ENCODE measurements at regions of chr6 and their contacts with region 1.

Region 1: DNA sequence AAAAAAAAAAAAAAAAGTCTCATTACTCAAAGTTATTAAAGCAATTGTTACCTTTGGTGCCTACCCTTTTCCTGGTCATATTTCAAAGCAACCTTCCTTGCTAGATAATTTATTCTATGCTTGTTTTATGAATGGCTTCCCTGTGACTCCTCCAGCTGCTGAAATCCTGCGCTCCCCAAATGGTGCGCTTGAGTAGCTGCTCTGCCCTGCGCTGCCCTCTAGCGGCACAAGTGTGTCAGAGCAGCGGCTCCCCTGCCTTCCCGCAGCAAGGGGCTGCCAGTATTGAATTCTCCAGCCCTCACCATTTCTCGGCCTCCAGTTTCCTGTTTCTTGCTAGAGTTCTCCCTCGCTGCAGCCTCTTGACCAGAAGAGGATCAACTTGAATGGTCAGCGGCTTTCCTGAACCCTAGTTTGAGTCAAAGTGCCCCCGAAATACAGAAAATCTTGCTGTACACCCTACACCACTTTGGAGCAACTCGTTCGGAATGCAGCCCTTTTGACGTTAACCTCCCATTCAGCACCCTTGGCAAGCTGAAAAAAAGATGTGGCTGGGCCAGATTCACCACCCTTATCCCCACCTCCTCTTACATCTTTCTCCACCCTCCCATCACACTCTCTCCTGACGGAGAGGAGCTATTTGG is 60.4 kb upstream of the KLHL31 start:
- DNase-seq: peak; percentile 82
- H3K4me3 Mint-ChIP-seq: no peak overlapping the region
- H3K27ac Mint-ChIP-seq: no peak overlapping the region
- H3K4me1 Mint-ChIP-seq: peaks cover 8% of the 10 kb centered on the region
- H3K27me3 Mint-ChIP-seq: peaks cover 19% of the 10 kb centered on the region

Region 2: DNA sequence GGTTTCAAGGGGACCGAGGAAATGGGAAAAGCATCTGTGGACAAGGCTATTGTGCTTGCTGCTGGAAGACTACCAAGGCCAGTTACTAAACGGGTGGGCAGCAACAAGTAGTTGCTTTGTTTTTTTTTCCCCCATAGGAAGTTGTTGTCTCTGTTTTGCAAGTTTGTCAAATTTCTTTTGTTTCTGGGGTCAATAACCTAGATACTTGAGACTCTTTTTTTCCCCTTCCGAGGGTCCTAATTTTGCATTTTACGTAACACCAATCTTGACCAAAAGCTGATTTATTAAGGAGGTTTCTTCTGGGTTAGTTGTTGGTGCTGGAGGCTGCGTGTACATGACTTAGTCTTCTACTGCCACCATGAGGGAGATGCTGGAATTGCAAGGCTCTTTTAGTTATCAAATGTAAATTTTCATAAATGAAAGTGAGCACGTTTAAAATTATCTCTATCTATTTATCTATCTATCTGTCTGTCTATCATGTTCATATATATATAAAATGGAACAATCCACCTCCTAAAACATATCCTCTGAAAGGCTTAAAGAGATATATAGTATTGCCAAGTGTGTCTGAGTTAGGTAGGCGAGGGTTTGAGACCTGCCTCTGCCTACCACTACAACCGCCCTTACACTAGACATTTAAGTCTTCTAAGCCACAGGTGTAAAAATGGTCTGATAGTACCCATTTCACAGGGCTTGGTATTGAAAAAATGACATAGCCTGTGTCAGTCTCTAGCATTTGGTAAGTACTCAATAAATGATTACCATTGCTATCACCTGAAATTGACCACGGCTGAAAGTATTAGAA is 241.2 kb before region 1 on chr6:
- CTCF ChIA-PET with region 1: interaction called, 13 read pairs
- POLR2A ChIA-PET with region 1: no interaction called
- intact Hi-C with region 1: no loop called
- DNase-seq: peak; percentile 68
- H3K4me3 Mint-ChIP-seq: no peak overlapping the region
- H3K27ac Mint-ChIP-seq: no peak overlapping the region
- H3K4me1 Mint-ChIP-seq: peaks cover 9% of the 10 kb centered on the region
- H3K27me3 Mint-ChIP-seq: peaks cover 28% of the 10 kb centered on the region

Region 3: GRCh38 chr6:53513519-53513966 is 212.4 kb before region 1 on chr6:
- CTCF ChIA-PET with region 1: interaction called, 13 read pairs
- POLR2A ChIA-PET with region 1: no interaction called
- intact Hi-C with region 1: no loop called
- DNase-seq: no peak
- H3K4me3 Mint-ChIP-seq: no peak overlapping the region
- H3K27ac Mint-ChIP-seq: no peak overlapping the region
- H3K4me1 Mint-ChIP-seq: no peaks in the 10 kb centered on the region
- H3K27me3 Mint-ChIP-seq: no peaks in the 10 kb centered on the region

Region 4: DNA sequence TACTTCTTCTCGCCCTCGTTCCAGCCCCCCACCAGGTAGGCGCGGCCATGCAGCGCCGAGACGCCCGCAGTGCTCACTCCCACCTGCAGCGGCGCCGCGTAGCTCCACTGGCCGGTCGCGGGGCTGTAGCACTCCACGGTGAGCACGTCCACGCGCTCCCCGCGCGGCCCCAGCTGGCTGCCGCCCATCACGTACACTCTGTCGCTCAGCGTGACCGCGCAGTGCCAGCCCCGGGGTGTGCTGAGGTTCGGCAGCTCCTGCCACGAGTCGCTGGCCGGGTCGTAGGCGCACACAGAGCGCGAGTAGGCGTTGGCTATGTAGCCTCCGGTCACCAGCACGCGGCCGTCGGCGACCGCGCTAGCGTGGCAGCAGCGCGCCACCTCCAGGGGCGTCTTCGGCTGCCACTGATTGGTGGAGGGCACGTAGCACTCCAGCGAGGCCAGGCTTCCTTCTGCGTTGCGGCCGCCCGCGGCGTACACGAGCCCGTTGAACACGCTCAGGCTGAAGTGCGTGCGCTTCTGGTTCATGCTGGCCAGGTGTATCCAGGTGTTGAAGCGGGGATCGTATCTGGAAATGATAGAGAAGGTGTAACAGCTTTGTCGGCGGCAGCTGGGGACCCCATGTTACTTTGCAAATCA is 74.0 kb before region 1 on chr6:
- CTCF ChIA-PET with region 1: interaction called, 22 read pairs
- POLR2A ChIA-PET with region 1: no interaction called
- intact Hi-C with region 1: loop called (anchors 1 kb)
- DNase-seq: peak; percentile 86
- H3K4me3 Mint-ChIP-seq: peak overlapping the region; percentile 85
- H3K27ac Mint-ChIP-seq: peak overlapping the region; percentile 80
- H3K4me1 Mint-ChIP-seq: peaks cover 31% of the 10 kb centered on the region
- H3K27me3 Mint-ChIP-seq: no peaks in the 10 kb centered on the region

Region 5: GRCh38 chr6:53707108-53707897 is 18.6 kb before region 1 on chr6:
- CTCF ChIA-PET with region 1: interaction called, 10 read pairs
- POLR2A ChIA-PET with region 1: no interaction called
- intact Hi-C with region 1: no loop called
- DNase-seq: no peak
- H3K4me3 Mint-ChIP-seq: no peak overlapping the region
- H3K27ac Mint-ChIP-seq: no peak overlapping the region
- H3K4me1 Mint-ChIP-seq: no peaks in the 10 kb centered on the region
- H3K27me3 Mint-ChIP-seq: peaks cover 16% of the 10 kb centered on the region

Region 6: DNA sequence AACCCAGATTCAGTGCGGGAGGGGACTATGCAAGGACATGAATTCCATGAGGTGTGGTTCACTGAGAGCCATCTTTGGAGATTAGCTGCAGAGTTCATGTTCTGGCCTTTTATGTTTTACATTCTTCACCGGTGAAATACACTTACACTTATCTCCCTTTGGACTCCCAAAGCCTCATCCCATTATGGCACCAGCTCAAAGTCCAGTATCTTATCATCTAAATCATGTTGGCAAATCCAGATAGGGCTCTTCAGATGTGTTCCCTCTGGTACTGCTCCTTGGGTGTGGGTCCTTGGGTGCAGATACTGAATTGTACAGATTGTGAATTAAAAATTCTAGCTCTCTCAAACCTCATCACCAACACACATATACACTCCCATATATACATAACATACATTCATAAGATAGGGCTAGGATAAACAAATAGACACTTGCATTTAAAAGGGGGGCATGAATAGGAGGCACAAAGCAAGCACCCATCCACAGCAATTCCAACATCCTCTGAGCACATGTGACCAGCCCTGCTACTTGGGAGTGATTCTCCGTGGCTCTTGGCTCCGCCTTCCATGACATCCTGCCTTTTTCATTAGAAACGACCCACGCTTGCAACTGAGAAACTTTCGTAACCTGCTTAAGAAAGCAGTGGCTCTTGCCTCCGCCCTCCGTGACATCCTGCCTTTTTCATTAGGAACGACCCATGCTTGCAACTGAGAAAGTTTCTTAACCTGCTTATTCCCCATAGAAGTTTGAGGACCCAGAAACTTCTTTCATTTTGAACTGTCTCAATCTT is 15.3 kb after region 1 on chr6:
- CTCF ChIA-PET with region 1: interaction called, 35 read pairs
- POLR2A ChIA-PET with region 1: no interaction called
- intact Hi-C with region 1: no loop called
- DNase-seq: peak; percentile 67
- H3K4me3 Mint-ChIP-seq: peak overlapping the region; percentile 20
- H3K27ac Mint-ChIP-seq: no peak overlapping the region
- H3K4me1 Mint-ChIP-seq: peaks cover 13% of the 10 kb centered on the region
- H3K27me3 Mint-ChIP-seq: peaks cover 3% of the 10 kb centered on the region

Region 7: DNA sequence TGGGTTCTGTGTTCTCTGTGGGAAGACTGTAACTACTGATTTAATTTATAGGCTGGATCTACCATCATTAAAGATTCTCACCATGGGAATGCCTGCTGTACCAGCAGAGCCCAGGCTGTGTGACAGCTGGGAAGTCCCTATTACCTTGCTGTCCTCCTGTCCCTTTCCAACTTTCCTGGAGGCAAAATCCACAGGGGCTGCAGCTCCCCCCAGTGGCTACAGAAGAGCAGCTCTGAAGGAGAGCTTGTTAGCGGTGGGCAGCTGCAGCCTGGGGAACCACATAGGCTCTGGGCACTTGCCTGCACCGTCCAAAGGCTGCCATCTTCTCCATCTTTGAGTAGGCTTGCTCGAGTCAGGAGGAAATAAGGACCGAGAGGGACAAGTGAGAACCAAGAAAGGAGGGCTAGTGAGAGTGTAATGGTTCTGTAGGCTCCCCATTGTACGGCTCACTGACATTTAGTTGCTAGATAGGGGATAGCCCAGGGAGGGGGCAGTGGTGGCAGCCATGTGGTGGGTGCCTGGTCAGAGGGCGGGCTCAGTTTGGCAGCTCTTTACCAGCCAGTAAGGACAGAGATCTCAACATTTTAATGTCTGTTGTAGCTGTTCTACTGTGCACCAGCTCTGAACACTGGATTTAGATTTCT is 230.3 kb after region 1 on chr6:
- CTCF ChIA-PET with region 1: interaction called, 20 read pairs
- POLR2A ChIA-PET with region 1: no interaction called
- intact Hi-C with region 1: no loop called
- DNase-seq: peak; percentile 46
- H3K4me3 Mint-ChIP-seq: no peak overlapping the region
- H3K27ac Mint-ChIP-seq: no peak overlapping the region
- H3K4me1 Mint-ChIP-seq: no peaks in the 10 kb centered on the region
- H3K27me3 Mint-ChIP-seq: peaks cover 2% of the 10 kb centered on the region